Activated naive CD4-positive, alpha-beta T cell treated with anti-CD3 and anti-CD28 coated beads for 36 hours (primary cell): ENCODE measurements at regions of chr1 and their contacts with region 1.

Region 1: GRCh38 chr1:117664314-117664713 is 58.5 kb downstream of the TENT5C start:
- DNase-seq: peak; percentile 89
- H3K4me3 Mint-ChIP-seq: no peak overlapping the region
- H3K27ac Mint-ChIP-seq: peak overlapping the region; percentile 71
- H3K4me1 Mint-ChIP-seq: peaks cover 71% of the 10 kb centered on the region
- H3K27me3 Mint-ChIP-seq: peaks cover 6% of the 10 kb centered on the region

Region 2: DNA sequence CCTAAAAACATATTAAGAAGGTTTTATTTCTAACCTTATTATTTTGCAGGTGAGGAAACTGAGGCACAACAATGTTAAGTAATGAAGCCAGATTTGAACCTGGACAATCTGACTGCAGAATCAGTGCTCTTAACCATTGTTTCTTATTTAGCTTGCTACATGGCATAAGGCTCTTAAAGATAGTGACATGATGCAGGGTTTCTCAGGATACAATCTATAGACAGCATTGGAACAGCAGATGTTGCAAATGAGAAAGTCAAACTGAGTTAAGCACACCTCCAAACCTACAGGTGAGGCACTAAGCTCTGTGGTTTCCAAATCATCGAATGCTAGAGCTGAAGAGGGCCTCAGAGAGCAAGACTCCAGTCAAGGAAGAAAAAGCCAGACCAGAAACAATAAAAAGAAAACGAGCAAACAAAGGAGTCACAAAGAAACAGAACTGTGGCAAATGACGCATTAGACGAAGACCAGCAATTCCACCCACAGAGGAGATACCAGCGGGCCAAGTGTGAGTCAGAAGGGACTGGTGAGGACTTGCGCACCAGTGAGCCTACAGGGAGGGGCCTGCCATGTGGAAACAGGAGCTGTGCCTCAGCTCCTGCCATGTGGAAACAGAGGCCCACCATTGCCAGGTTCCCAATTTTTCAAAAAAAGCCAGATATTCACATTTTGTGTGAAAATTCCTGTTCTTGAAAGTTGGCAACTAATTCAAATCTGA is 1107.9 kb before region 1 on chr1:
- CTCF ChIA-PET with region 1: no interaction called
- intact Hi-C with region 1: loop called (anchors 5 kb)
- DNase-seq: peak; percentile 82
- H3K4me3 Mint-ChIP-seq: no peak overlapping the region
- H3K27ac Mint-ChIP-seq: peak overlapping the region; percentile 78
- H3K4me1 Mint-ChIP-seq: peaks cover 56% of the 10 kb centered on the region
- H3K27me3 Mint-ChIP-seq: no peaks in the 10 kb centered on the region

Region 3: GRCh38 chr1:116826818-116827606 is 837.3 kb before region 1 on chr1:
- CTCF ChIA-PET with region 1: no interaction called
- intact Hi-C with region 1: loop called (anchors 1 kb)
- DNase-seq: peak; percentile 92
- H3K4me3 Mint-ChIP-seq: peak overlapping the region; percentile 83
- H3K27ac Mint-ChIP-seq: peak overlapping the region; percentile 97
- H3K4me1 Mint-ChIP-seq: peaks cover 74% of the 10 kb centered on the region
- H3K27me3 Mint-ChIP-seq: no peaks in the 10 kb centered on the region

Region 4: GRCh38 chr1:117077267-117077666 is 587.0 kb before region 1 on chr1:
- CTCF ChIA-PET with region 1: no interaction called
- intact Hi-C with region 1: loop called (anchors 1 kb)
- DNase-seq: peak; percentile 79
- H3K4me3 Mint-ChIP-seq: no peak overlapping the region
- H3K27ac Mint-ChIP-seq: peak overlapping the region; percentile 76
- H3K4me1 Mint-ChIP-seq: peaks cover 38% of the 10 kb centered on the region
- H3K27me3 Mint-ChIP-seq: no peaks in the 10 kb centered on the region

Region 5: GRCh38 chr1:117527566-117528102 is 136.7 kb before region 1 on chr1:
- CTCF ChIA-PET with region 1: interaction called, 8 read pairs
- intact Hi-C with region 1: loop called (anchors 1 kb)
- DNase-seq: no peak
- H3K4me3 Mint-ChIP-seq: no peak overlapping the region
- H3K27ac Mint-ChIP-seq: no peak overlapping the region
- H3K4me1 Mint-ChIP-seq: peaks cover 25% of the 10 kb centered on the region
- H3K27me3 Mint-ChIP-seq: no peaks in the 10 kb centered on the region

Region 6: DNA sequence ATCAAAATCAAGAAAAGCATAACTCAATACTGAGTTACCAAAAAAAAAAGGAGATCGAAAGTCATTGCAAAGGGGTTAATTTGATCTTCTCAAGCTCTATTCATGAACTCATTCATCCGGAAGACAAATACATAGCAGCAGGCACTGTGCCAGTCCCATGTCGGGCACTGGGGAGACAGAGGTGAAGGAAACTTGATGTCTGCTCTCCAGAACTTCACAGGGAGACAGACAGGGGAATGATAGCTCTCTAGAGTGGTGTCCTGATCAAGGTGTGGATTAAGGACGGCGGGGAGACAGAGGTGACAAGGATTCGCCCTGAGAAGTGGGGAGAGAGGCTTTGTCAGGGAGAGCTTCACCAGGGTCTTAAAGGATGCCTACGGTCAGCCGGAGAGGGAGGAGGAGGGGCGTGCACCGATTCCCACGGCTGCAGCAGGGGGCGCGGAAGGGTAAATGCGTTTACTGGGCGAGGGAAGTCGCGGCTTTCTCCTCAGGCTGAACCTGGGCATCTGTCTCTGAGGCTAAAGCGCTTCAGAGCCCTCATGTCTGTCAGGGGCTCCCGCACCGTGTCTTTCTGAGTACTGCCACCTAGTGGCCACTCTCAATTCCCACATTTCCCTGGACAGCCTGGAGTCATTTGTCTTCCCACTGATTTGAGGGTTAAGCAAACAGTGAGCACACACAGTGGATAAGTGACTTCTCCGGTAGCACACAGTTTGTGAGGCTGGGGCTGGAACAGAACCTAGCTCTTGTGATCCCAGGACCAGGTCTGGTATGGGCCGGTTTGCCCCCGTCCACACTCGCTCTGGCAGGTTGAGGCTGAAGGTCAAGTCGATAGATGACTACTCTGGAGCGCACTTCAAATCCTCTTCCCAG is 94.4 kb after region 1 on chr1:
- CTCF ChIA-PET with region 1: interaction called, 5 read pairs
- intact Hi-C with region 1: loop called (anchors 5 kb)
- DNase-seq: peak; percentile 77
- H3K4me3 Mint-ChIP-seq: peak overlapping the region; percentile 63
- H3K27ac Mint-ChIP-seq: no peak overlapping the region
- H3K4me1 Mint-ChIP-seq: peaks cover 12% of the 10 kb centered on the region
- H3K27me3 Mint-ChIP-seq: peaks cover 10% of the 10 kb centered on the region